ENCODE measurements at regions of chr3 and their contacts with region 1.

Region 1: GRCh38 chr3:101069901-101070798 is 76.9 kb upstream of the ABI3BP start:
- DNase-seq: peak; percentile 5 to 22
- ATAC-seq: peak in 1 of 2 donors; percentile 39
- H3K4me3 ChIP-seq: no peak overlapping the region
- H3K27ac ChIP-seq: no peak overlapping the region
- H3K4me1 ChIP-seq: peaks cover 0 to 3% of the 10 kb centered on the region in 2 donors
- H3K27me3 ChIP-seq: no peaks in the 10 kb centered on the region
- CTCF ChIP-seq: peak in 4 of 5 experiments; percentile 35 to 71 (median 58)
- POLR2A ChIP-seq: no peak

Region 2: DNA sequence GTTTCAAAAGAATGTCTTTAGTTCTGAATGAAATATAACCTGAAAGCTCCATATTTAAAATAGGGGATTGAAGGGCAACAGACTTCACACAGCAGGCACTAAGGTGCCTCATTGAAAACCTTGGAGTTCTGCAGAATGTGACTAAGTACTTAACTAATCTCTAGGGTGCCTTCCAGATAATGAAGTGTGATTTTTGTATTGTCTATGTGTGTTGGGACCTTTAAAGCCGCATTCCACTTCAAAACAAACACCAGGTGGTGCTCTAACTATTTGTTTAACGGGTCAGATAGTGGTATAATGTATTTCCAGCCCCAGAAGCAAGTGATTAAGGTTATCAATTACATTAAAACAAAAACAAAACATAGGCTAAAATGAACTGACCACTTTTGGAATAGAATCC is 332.8 kb before region 1 on chr3:
- in situ Hi-C with region 1: no loop called
- intact Hi-C with region 1: no loop called
- DNase-seq: no peak
- ATAC-seq: no peak
- H3K4me3 ChIP-seq: no peak overlapping the region
- H3K27ac ChIP-seq: peak overlapping the region in 2 of 4 donors; percentile 52 to 54
- H3K4me1 ChIP-seq: peaks cover 22 to 29% of the 10 kb centered on the region in 2 donors
- H3K27me3 ChIP-seq: no peaks in the 10 kb centered on the region
- CTCF ChIP-seq: peak in 4 of 5 experiments; percentile 33 to 47 (median 39)
- POLR2A ChIP-seq: no peak

Region 3: DNA sequence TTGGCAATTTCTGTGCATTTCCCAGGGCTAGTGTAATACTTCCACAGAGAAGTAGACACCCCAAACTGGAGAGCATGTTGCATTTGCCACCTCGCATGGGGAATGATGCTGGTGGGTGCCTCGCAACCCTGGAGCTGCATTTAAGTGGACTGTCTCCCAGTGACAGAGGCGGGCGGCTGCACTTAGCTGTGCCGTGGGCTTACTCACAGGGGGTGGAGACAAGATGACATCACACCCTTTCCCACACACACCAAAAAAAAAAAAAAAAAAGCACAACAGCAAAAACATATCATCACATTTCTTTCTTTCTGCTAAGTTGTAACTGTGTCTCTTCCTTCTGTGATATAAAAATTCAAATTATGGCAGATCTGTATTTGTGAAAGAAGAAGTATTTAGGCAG is 76.8 kb before region 1 on chr3 and contains the start of gene ABI3BP:
- in situ Hi-C with region 1: no loop called
- intact Hi-C with region 1: loop called (anchors 10 kb)
- DNase-seq: peak; percentile 18 to 30
- ATAC-seq: peak in 1 of 2 donors; percentile 70
- H3K4me3 ChIP-seq: peak within 1 kb of the TSS; percentile 35 to 45 (median 38)
- H3K27ac ChIP-seq: peak within 1 kb of the TSS; percentile 2 to 51 (median 22)
- H3K4me1 ChIP-seq: peaks cover 0 to 7% of the 10 kb centered on the region in 2 donors
- H3K27me3 ChIP-seq: no peaks in the 10 kb centered on the region
- CTCF ChIP-seq: no peak
- POLR2A ChIP-seq: peak; percentile 28 to 45
- total RNA-seq, gene ABI3BP: 15.3 to 21.8 (median 19.5) TPM

Region 4: DNA sequence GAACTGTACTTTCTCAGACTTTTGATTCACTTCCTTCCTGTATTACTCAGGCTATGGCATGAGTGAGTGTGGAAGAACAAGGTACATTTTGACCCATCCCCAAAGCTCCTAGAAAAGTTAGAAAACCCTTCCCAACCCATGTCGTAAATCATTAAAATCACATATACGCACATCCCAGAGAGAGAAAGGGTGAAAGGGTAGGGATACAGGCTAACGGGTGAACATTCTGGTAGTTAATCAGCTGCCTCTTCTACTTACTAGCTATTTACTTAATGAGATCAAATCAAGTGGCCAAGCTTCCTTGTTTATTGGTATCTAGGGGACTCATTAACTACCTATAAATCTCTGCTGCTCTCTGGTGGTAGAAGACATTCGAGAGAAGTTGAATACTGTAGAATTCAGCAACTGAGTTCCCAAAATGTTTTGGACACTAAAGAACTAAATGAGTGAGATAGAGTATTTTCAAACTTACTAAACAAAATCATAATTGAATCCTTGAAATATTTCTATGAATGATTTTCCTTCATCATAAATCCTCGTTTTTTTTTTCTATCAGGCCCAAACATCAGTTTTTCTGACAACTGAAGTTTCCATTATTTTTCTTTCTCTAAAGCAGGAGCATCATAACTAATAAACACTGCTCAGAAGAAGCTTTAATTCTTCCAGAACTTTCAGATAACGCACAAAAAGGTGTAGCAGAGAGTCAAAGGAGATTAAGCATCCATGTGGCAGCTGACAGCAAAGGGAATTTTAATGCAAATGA is 126.0 kb after region 1 on chr3:
- in situ Hi-C with region 1: no loop called
- intact Hi-C with region 1: loop called (anchors 10 kb)
- DNase-seq: no peak
- ATAC-seq: no peak
- H3K4me3 ChIP-seq: no peak overlapping the region
- H3K27ac ChIP-seq: no peak overlapping the region
- H3K4me1 ChIP-seq: no peaks in the 10 kb centered on the region
- H3K27me3 ChIP-seq: no peaks in the 10 kb centered on the region
- CTCF ChIP-seq: peak in 4 of 5 experiments; percentile 7 to 46 (median 34)
- POLR2A ChIP-seq: no peak

Region 5: GRCh38 chr3:101381809-101382208 is 311.7 kb after region 1 on chr3:
- in situ Hi-C with region 1: loop called in 1 of 4 experiments (anchors 25 kb)
- intact Hi-C with region 1: loop called (anchors 1 kb)
- DNase-seq: no peak
- ATAC-seq: peak; percentile 68 to 71
- H3K4me3 ChIP-seq: no peak overlapping the region
- H3K27ac ChIP-seq: no peak overlapping the region
- H3K4me1 ChIP-seq: peaks cover 20 to 37% of the 10 kb centered on the region in 2 donors
- H3K27me3 ChIP-seq: no peaks in the 10 kb centered on the region
- CTCF ChIP-seq: peak in 4 of 5 experiments; percentile 20 to 52 (median 42)
- POLR2A ChIP-seq: no peak

Measured in gastrocnemius medialis (tissue), 4 donors.